ENCODE measurements at regions of chr15 and their contacts with region 1.

Region 1: DNA sequence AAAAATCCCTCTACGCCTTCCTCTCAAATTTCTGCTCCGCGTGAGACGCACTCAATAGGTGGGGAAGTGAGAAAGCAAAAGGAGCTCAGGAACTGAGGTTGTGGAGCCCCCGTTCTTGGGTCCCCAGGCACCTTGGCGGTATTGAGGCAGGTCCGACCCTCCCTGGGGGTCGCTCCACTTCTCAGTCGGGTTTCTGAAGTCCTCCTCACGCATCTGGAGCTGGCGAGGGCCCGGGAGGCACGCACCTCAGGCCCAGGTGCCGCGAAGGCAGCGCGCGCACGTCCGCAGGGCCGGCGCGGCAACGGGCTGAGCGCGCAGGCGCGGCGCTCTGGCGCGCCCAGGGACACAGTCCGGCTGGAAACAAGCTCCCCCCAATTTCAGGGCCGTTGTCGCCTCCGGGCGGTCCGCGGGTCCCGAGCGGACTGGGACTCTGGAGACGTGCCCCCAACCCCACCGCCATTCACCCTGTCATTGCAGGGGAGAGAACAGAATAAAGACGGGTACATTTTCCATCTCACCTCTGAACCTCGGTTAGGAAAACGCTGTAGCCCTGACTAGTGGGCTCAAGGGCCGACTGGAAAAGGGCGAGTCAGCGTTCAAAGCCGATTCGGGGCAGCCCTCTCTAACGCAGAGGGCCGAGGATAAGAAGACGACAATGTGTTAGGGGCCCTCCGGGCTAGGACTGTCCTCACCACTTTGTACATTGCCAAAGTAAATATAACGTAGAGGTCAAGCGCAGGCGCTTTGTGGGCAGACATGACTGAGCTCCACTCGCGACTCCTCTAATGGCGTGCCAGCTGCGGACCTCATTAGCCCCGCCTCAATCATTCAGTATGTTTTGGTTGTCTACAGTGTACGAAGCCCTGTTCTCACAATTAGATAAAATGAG is at the start of gene ZNF770:
- DNase-seq: peak; percentile 64
- ATAC-seq: peak; percentile 92
- H3K4me3 ChIP-seq: peak within 1 kb of the TSS; percentile 70 to 95 (median 76)
- H3K27ac ChIP-seq: peak within 1 kb of the TSS; percentile 96
- H3K4me1 ChIP-seq: peaks cover 45% of the 10 kb centered on the region
- H3K27me3 ChIP-seq: no peaks in the 10 kb centered on the region; a peak in 2 of 5 replicates
- CTCF ChIP-seq: peak; percentile 33
- EP300 ChIP-seq: no peak
- POLR2A ChIP-seq: peak; percentile 80 to 82
- RAD21 ChIP-seq: peak; percentile 45
- total RNA-seq, gene ZNF770: 33.1 and 79.5 TPM in 2 replicates

Region 2: GRCh38 chr15:34969340-34970097 is 18.7 kb before region 1 on chr15 and contains the start of gene AQR:
- CTCF ChIA-PET with region 1: no interaction called
- POLR2A ChIA-PET with region 1: interaction called, 125 read pairs
- in situ Hi-C with region 1: no loop called
- intact Hi-C with region 1: loop called (anchors 1 kb)
- DNase-seq: peak; percentile 96
- ATAC-seq: peak; percentile 99
- H3K4me3 ChIP-seq: peak within 1 kb of the TSS; percentile 85 to 94 (median 94)
- H3K27ac ChIP-seq: peak within 1 kb of the TSS; percentile 69
- H3K4me1 ChIP-seq: peaks cover 28% of the 10 kb centered on the region
- H3K27me3 ChIP-seq: no peaks in the 10 kb centered on the region; a peak in 1 of 5 replicates
- CTCF ChIP-seq: peak; percentile 96
- EP300 ChIP-seq: peak; percentile 14 to 37; a peak in 1 of 4 replicates
- POLR2A ChIP-seq: peak; percentile 88 to 93
- RAD21 ChIP-seq: 0 out of 2 replicates have a peak, but pooled peaks have one; percentile 46
- total RNA-seq, gene AQR: 31.3 and 46.0 TPM in 2 replicates